AG04450 (cell line): ENCODE measurements at regions of chr4 and their contacts with region 1.

Region 1: GRCh38 chr4:140252742-140253555 is 99.0 kb upstream of the MAML3 start:
- DNase-seq: no peak
- H3K4me3 ChIP-seq: peak overlapping the region; percentile 55
- H3K27ac ChIP-seq: no peak overlapping the region
- H3K27me3 ChIP-seq: no peaks in the 10 kb centered on the region
- CTCF ChIP-seq: peak; percentile 78

Region 2: DNA sequence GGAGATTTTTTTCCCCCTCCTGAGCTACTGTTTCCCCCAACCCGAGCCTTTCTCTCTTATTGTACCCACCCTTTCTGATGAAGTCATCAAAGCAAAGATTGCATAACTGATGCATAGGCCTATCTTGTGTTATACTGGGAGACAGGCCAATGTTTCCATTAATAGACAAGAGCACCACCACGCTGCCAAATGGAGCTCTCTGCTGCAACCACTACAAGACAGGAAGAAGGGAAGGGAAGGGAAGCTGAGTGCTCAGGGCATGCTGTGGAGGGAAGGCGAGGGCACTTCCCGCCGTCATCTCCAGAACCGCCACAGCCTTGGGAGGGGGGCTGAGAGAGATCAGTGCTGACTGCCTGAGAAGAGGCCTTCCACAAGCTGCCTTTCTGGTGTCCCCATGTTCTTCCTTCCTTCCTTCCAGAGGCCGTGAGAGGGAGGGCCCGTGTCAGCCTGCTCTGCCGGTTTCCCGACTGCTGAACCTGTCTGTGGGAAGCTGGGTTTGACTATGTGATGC is 512.4 kb before region 1 on chr4:
- CTCF ChIA-PET with region 1: interaction called, 15 read pairs
- POLR2A ChIA-PET with region 1: no interaction called
- DNase-seq: peak; percentile 78
- H3K4me3 ChIP-seq: no peak overlapping the region
- H3K27ac ChIP-seq: peak overlapping the region; percentile 48
- H3K27me3 ChIP-seq: no peaks in the 10 kb centered on the region
- CTCF ChIP-seq: peak; percentile 50

Region 3: GRCh38 chr4:139889901-139890300 is 363.0 kb before region 1 on chr4:
- CTCF ChIA-PET with region 1: no interaction called
- POLR2A ChIA-PET with region 1: no interaction called
- DNase-seq: no peak
- H3K4me3 ChIP-seq: no peak overlapping the region
- H3K27ac ChIP-seq: no peak overlapping the region
- H3K27me3 ChIP-seq: no peaks in the 10 kb centered on the region
- CTCF ChIP-seq: no peak

Region 4: DNA sequence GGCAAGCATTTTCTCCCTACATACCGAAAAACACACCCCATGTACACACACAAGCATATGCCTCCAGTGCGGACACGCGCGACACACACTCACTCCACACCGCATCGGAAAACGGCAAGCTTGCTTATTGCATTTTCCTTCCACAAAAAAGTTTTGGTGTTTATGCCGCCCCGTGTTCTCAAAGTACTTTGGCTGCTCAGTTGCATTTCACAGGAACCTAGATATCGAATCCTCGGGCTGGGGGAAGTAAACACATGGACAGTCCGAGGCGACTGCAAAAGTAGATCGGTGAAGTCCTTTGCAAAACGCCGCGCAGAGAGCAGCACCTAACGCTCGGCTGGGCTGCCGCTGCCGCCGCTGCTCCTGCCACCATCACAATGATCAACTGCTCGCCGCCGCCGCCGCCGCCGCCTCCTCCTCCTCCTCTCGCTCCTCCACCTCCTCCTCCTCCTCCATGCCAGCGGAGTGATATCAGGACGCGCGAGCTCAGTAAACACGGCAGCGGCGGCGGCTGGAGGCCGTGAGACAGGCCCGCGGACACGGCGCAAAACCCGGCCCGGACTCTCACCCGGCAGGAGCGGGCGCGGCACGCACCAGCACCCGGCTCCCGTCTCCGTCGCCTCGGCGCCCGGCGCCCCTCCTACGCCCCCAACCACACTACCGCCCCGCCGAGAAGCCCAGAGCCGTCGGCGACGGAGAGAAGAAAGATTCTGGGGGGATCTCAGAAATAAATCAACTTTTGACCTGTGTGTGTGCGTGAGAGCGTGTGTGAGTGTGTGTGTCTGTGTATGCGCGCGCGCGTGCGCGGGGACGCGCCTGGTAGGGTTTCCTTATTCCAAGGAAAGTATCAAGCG is 99.0 kb before region 1 on chr4 and contains the start of gene MAML3:
- CTCF ChIA-PET with region 1: interaction called, 6 read pairs
- POLR2A ChIA-PET with region 1: interaction called, 13 read pairs
- DNase-seq: peak; percentile 91
- H3K4me3 ChIP-seq: peak within 1 kb of the TSS; percentile 70
- H3K27ac ChIP-seq: peak within 1 kb of the TSS; percentile 70
- H3K27me3 ChIP-seq: no peaks in the 10 kb centered on the region
- CTCF ChIP-seq: no peak
- polyA plus RNA-seq, gene MAML3: 3.5 and 4.1 TPM in 2 replicates

Region 5: DNA sequence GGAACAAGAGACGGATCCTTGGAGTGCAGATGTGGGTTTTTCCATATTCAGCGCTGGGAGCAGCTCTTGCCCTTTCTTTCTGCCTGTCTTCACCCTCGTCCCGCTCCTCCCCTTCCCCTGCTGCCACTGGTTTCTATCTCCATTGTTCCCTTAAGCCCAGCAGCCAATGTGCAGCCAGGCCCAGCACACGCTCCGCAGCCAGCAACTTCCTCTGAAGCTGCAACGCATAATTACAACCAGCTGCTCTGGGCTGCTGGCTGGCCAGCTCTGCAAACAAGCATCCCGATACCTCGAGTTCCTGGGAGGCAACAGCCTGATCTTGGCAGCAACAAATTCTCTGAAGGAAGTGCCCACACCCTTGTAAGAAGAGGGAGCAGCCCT is 15.4 kb before region 1 on chr4:
- CTCF ChIA-PET with region 1: interaction called, 24 read pairs
- POLR2A ChIA-PET with region 1: interaction called, 11 read pairs
- DNase-seq: peak; percentile 88
- H3K4me3 ChIP-seq: peak overlapping the region; percentile 37; the same call in 1 of the 2 replicates
- H3K27ac ChIP-seq: peak overlapping the region; percentile 97
- H3K27me3 ChIP-seq: no peaks in the 10 kb centered on the region
- CTCF ChIP-seq: no peak

Region 6: GRCh38 chr4:140305053-140305452 is 52.1 kb after region 1 on chr4:
- CTCF ChIA-PET with region 1: interaction called, 10 read pairs
- POLR2A ChIA-PET with region 1: no interaction called
- DNase-seq: no peak
- H3K4me3 ChIP-seq: no peak overlapping the region
- H3K27ac ChIP-seq: no peak overlapping the region
- H3K27me3 ChIP-seq: no peaks in the 10 kb centered on the region
- CTCF ChIP-seq: no peak

Region 7: DNA sequence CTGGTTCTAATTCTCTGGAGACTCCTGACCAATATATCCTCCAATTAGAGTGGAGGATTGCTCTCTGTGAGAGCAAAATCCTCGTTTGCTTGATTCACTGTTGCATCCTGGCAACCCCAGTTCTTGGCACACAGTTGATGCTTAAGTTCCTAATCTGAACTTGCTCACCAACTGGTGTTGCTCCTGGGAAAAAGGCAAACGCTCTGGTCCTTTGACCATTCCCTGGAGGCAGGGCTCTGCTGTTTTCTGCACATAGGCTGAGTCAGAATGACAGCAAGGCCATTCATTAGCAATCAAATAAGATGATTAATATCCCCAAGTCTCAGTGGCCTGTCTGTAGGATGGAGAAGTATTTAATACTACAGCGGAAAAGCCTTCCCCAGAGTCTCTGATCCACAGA is 675.9 kb after region 1 on chr4:
- CTCF ChIA-PET with region 1: no interaction called
- POLR2A ChIA-PET with region 1: no interaction called
- DNase-seq: no peak
- H3K4me3 ChIP-seq: no peak overlapping the region
- H3K27ac ChIP-seq: no peak overlapping the region
- H3K27me3 ChIP-seq: no peaks in the 10 kb centered on the region
- CTCF ChIP-seq: no peak